Activated CD4-positive, alpha-beta memory T cell treated with anti-CD3 and anti-CD28 coated beads for 36 hours (primary cell): ENCODE measurements at regions of chr1 and their contacts with region 1.

Region 1: GRCh38 chr1:15966081-15966955 is 9.6 kb downstream of the ZBTB17 start:
- DNase-seq: peak; percentile 94
- H3K4me3 Mint-ChIP-seq: peak overlapping the region; percentile 74
- H3K27ac Mint-ChIP-seq: peak overlapping the region; percentile 100
- H3K4me1 Mint-ChIP-seq: peaks cover 81% of the 10 kb centered on the region
- H3K27me3 Mint-ChIP-seq: no peaks in the 10 kb centered on the region

Region 2: DNA sequence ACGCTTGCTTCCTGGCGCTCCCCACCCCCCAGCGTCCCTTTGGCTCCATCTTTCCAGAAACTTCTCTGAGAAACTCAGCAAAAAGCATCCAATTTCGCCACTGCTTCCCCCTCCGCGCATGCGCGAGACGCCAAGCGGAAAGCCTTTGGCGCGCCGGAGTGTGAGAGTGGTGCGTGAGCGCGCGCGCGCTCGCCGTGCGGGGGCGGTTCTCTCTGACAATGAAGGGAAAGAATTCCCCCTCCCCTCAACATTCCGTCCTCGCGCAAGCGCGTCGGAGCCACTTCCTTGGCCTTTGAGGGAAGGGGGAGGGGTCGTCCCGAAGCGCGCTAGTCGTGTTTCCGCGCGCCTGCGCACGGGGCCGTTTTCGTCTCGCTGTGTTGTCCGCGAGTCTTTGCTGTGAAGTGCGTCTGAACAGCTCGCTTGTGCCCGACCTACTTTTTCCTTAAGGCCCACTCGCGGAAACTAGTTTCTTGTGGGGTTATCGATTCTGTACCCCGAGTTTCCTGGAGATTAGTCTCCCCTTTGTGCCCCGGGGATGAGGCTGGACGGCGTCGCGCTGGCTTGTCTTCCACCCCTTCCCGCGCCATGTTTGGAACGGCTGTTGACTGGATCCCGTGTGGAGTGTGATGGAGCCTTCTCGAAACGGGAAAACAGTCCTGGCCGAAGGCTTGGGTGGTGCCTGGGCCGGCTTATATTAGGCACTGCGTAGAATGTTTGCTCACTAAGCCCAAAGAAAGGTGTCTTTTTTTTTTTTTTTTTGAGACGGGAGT is 130.4 kb before region 1 on chr1:
- CTCF ChIA-PET with region 1: no interaction called
- POLR2A ChIA-PET with region 1: interaction called, 11 read pairs
- intact Hi-C with region 1: loop called (anchors 1 kb)
- DNase-seq: peak; percentile 100
- H3K4me3 Mint-ChIP-seq: peak overlapping the region; percentile 81
- H3K27ac Mint-ChIP-seq: peak overlapping the region; percentile 96
- H3K4me1 Mint-ChIP-seq: peaks cover 18% of the 10 kb centered on the region
- H3K27me3 Mint-ChIP-seq: no peaks in the 10 kb centered on the region

Region 3: DNA sequence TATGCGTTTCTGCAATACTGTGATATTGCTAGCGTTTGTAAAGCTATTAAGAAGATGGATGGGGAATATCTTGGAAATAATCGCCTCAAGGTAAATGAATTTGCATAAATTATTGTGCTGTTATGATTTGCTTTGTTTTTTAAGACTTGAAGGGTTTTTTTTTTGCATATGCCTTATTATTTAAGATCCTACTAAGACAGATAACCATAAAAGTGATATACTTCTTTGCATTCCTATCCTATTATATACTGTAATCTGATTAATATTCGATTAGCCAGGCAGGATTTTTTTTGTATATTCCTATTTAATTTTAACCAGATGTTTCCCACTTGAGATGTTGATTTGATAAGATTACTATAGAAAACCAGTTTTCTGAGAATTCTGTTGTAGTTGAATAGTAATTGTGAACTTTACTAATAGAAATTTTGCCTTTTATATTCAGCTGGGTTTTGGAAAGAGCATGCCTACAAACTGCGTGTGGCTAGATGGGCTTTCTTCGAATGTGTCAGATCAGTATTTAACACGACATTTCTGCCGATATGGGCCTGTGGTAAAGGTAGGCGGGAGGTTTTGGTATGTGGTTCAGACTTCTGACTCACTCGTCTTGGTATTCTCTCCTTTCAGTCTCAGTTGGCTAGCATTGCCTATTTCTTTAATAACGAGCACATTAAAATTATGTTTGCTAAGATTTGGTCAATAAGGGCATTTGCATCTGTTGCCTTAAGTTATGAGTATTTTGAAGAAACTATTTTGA is 47.2 kb before region 1 on chr1:
- CTCF ChIA-PET with region 1: interaction called, 4 read pairs
- POLR2A ChIA-PET with region 1: interaction called, 4 read pairs
- intact Hi-C with region 1: loop called (anchors 1 kb)
- DNase-seq: peak; percentile 89
- H3K4me3 Mint-ChIP-seq: no peak overlapping the region
- H3K27ac Mint-ChIP-seq: no peak overlapping the region
- H3K4me1 Mint-ChIP-seq: peaks cover 41% of the 10 kb centered on the region
- H3K27me3 Mint-ChIP-seq: no peaks in the 10 kb centered on the region

Region 4: DNA sequence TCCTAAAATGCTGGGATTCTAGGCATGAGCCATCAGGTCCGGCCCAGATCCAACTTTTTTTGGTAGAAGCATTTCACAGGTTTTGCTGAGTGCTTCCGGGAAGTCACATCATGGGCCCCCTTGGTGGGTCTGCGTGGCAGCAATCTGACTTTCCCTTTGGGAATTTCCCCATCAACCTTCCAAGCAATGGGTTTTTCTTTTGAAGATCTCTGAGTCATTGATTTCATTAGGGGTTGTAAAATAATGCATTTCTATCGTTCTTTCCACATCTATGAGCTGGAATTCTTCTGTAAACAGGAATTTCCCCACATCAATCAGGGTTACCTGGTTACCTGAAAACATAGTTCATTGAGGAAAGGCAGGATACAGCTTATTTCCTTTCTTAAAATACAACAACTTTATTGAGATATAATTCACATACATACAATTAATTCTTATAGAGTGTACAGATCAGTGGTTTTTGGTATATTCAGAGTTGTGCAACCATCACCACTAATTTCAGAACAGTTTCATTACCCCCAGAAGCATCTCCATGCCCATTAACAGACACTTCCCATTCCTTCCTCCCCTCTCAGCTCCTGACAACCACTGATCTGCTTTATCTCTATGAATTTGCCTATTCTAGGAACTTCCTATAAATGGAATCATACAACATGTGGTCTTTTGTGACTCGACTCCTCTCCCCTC is 19.4 kb after region 1 on chr1:
- CTCF ChIA-PET with region 1: no interaction called
- POLR2A ChIA-PET with region 1: no interaction called
- intact Hi-C with region 1: no loop called
- DNase-seq: no peak
- H3K4me3 Mint-ChIP-seq: no peak overlapping the region
- H3K27ac Mint-ChIP-seq: no peak overlapping the region
- H3K4me1 Mint-ChIP-seq: peaks cover 25% of the 10 kb centered on the region
- H3K27me3 Mint-ChIP-seq: no peaks in the 10 kb centered on the region